Activated T-helper 1 cell treated with anti-CD3 and anti-CD28 coated beads, Interleukin-12 subunit alpha, Interleukin-12 subunit beta, Interleukin-2, Interleukin-4 antibody, amounts not matched to agents 30 ng/mL and 10 ng/mL and 1 ng/mL, durations not matched to agents 14 hours and 24 hours and 36 hours (primary cell): ENCODE measurements at regions of chr20 and their contacts with region 1.

Region 1: GRCh38 chr20:20568604-20569205 is 143.7 kb downstream of the RALGAPA2 start:
- DNase-seq: no peak
- H3K4me3 Mint-ChIP-seq: no peak overlapping the region
- H3K27ac Mint-ChIP-seq: no peak overlapping the region
- H3K4me1 Mint-ChIP-seq: peaks cover 5% of the 10 kb centered on the region
- H3K27me3 Mint-ChIP-seq: no peaks in the 10 kb centered on the region

Region 2: GRCh38 chr20:20184149-20184548 is 384.6 kb before region 1 on chr20:
- intact Hi-C with region 1: loop called (anchors 2 kb)
- DNase-seq: no peak
- H3K4me3 Mint-ChIP-seq: no peak overlapping the region
- H3K27ac Mint-ChIP-seq: no peak overlapping the region
- H3K4me1 Mint-ChIP-seq: no peaks in the 10 kb centered on the region
- H3K27me3 Mint-ChIP-seq: no peaks in the 10 kb centered on the region

Region 3: GRCh38 chr20:20360464-20360863 is 208.2 kb before region 1 on chr20:
- intact Hi-C with region 1: loop called (anchors 1 kb)
- DNase-seq: no peak
- H3K4me3 Mint-ChIP-seq: no peak overlapping the region
- H3K27ac Mint-ChIP-seq: no peak overlapping the region
- H3K4me1 Mint-ChIP-seq: peaks cover 24% of the 10 kb centered on the region
- H3K27me3 Mint-ChIP-seq: peaks cover 53% of the 10 kb centered on the region

Region 4: DNA sequence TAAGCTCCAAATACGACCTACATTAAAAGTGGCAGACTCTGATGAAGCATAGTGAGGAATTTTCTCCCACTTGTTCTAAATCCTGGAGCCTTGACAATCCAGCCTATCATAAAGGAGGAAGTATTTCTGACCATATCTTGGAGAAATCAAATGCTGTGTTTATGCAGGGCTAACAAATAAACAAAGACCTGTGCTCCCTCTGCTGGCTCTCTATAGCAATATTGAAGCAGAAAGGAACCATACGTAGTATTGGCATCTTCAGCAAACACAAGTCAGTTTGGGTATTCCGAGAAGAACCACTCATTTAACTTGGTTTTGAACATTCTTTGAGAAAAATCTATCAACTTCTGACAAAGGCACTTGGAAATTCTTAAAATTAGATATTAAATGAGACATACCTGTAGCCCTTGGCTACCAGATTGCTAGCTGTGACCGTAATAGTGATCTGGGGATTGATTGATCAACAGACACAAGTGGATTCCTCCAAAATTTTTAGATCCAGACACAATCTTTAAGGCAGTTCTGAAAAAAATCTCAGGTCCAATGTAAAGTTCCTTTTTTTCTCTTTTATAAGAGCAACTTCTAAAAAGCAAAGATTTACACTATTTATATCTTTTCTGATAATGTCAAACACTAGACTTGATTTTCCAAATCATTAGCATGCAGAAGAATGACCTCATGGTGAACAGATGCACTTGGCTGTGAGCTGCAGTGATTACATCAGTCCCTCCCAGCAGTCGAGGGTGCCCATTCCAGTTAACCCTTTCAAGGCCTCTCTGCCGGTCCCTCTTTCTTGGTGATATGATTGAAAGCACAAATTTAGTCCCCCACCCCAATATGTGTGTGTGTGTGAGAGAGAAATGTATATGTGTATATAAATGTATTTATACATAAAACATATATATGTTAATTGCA is 160.6 kb before region 1 on chr20:
- intact Hi-C with region 1: loop called (anchors 2 kb)
- DNase-seq: no peak
- H3K4me3 Mint-ChIP-seq: no peak overlapping the region
- H3K27ac Mint-ChIP-seq: no peak overlapping the region
- H3K4me1 Mint-ChIP-seq: peaks cover 8% of the 10 kb centered on the region
- H3K27me3 Mint-ChIP-seq: no peaks in the 10 kb centered on the region